Dendritic cell treated with granulocyte-macrophage colony-stimulating factor and Interleukin-4, amounts not matched to agents 40 ng/mL and 50 ng/mL, for 4 days (primary cell): ENCODE measurements at regions of chr16 and their contacts with region 1.

Region 1: DNA sequence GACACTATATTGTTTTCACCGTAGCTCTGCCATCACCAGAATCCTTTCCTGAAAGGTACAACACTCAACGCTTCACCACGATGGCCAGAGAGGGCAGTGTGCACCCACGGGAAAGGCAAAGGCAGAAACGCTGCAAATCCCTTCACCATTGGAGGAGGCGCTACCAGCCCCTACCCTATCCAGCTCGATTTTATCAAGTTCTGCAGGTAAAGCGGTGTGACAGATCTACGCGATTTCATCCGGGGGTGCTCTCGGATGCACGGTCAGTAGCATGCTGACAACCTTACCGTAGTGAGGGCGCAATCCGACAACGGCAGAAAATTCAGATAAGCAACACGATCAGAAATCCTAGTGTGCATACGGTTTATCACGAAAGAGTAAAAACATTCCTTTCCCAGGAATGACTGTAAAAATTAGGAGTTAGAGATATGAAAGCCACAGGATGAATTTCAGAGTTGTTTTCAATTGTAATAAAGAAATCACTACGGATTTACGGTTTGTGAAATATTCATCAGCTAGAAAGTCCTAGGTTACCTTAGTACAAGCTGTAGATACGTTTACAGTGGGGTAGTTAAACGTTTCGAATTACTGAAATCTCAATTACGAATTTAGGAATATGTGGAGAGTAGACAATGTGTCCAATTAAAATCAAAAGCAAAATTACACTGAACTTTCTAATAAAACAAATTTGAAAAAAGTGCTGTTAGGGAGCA is 1.8 kb downstream of the NETO2 start:
- H3K4me3 Mint-ChIP-seq: peak overlapping the region; percentile 78
- H3K27ac Mint-ChIP-seq: peak overlapping the region; percentile 78
- H3K4me1 Mint-ChIP-seq: peaks cover 37% of the 10 kb centered on the region
- H3K27me3 Mint-ChIP-seq: peaks cover 21% of the 10 kb centered on the region

Region 2: GRCh38 chr16:46973207-46973995 is 168.5 kb before region 1 on chr16 and contains the start of gene DNAJA2:
- intact Hi-C with region 1: loop called (anchors 5 kb)
- H3K4me3 Mint-ChIP-seq: peak within 1 kb of the TSS; percentile 93
- H3K27ac Mint-ChIP-seq: peak within 1 kb of the TSS; percentile 95
- H3K4me1 Mint-ChIP-seq: peaks cover 31% of the 10 kb centered on the region
- H3K27me3 Mint-ChIP-seq: no peaks in the 10 kb centered on the region

Region 3: GRCh38 chr16:47079860-47080259 is 62.1 kb before region 1 on chr16:
- intact Hi-C with region 1: loop called (anchors 5 kb)
- H3K4me3 Mint-ChIP-seq: no peak overlapping the region
- H3K27ac Mint-ChIP-seq: no peak overlapping the region
- H3K4me1 Mint-ChIP-seq: no peaks in the 10 kb centered on the region
- H3K27me3 Mint-ChIP-seq: no peaks in the 10 kb centered on the region

Region 4: GRCh38 chr16:47162670-47163420 is 20.9 kb after region 1 on chr16:
- intact Hi-C with region 1: no loop called
- H3K4me3 Mint-ChIP-seq: no peak overlapping the region
- H3K27ac Mint-ChIP-seq: no peak overlapping the region
- H3K4me1 Mint-ChIP-seq: no peaks in the 10 kb centered on the region
- H3K27me3 Mint-ChIP-seq: no peaks in the 10 kb centered on the region

Region 5: DNA sequence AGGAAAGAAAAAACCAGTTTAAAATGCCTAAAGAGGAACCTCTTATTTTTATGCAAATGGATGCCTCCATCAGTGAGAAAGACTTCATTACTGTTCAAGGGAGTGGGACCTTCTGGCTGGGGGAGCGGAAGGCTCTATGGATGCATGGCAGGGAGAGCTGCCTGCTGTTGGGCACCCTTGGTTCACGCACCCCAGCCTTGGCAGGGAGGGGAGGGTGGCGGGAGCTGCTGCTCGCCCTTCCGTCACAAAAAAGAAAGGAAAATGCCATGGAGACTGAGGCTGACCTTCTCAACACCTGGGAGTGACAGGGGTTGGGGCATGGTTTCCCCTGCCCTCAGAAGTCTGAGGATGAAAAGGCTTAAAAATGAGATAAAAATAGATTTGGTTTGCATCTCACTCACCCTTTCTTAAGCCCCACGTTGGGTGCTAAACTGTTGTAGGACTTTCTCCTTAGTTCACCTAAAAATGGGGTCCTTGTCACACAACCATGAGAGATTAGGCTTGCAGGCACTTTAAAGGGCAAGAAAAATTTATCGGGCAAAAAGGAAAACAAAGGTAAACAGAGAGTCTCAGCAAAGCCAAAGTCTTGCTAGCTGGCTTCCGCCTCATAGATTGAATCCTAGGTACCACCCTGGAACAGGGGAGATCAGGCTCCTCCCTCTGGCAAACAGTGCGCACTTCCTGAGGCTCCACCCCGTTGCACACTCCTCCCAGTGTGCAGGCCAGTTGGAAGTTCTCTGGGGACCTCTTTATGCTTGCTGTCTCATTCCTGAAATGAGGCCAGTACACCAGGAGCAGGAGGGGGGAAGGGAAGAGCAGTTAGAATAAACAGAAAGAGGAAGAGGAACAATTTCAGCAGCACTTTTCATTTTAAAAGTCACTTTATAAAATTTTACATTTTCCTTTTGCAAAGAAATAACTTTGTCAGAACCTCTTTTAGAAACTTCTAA is 350.8 kb after region 1 on chr16:
- intact Hi-C with region 1: loop called (anchors 10 kb)
- H3K4me3 Mint-ChIP-seq: peak overlapping the region; percentile 71
- H3K27ac Mint-ChIP-seq: peak overlapping the region; percentile 89
- H3K4me1 Mint-ChIP-seq: peaks cover 29% of the 10 kb centered on the region
- H3K27me3 Mint-ChIP-seq: no peaks in the 10 kb centered on the region

Region 6: DNA sequence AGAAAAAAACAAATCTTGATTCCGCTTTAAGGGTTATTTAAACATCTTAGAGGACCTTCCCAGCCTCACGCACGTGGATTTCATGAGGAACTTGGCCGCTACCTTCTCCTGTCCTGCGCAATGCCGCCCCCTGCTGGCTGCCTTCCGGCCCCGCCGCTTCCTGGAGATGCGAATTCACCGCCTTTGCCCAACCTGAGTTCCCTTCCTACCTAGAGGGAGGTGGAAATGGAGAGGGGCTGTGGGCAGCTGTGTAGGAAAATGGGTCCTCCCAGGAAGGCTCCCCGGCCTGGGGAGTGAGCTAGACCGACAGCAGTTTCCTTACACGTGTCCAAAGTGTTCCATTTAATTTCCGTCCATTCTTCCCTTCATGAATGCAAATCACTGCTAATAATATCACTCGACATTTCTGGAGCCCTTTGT is 1014.9 kb after region 1 on chr16:
- intact Hi-C with region 1: loop called (anchors 2 kb)
- H3K4me3 Mint-ChIP-seq: no peak overlapping the region
- H3K27ac Mint-ChIP-seq: no peak overlapping the region
- H3K4me1 Mint-ChIP-seq: peaks cover 5% of the 10 kb centered on the region
- H3K27me3 Mint-ChIP-seq: peaks cover 35% of the 10 kb centered on the region